Heart right ventricle (tissue), 16 donors: ENCODE measurements at regions of chr7 and their contacts with region 1.

Region 1: GRCh38 chr7:44200647-44201461 is at the start of gene YKT6:
- DNase-seq: peak; percentile 91 to 93
- ATAC-seq: peak; percentile 97 to 99 (median 98)
- H3K4me3 ChIP-seq: peak within 1 kb of the TSS; percentile 63 to 96 (median 84)
- H3K27ac ChIP-seq: peak within 1 kb of the TSS in 9 of 10 donors; percentile 46 to 91 (median 83)
- H3K4me1 ChIP-seq: peaks cover 4 to 31% (median 16%) of the 10 kb centered on the region in 9 donors
- H3K27me3 ChIP-seq: peaks cover 0 to 8% (median 0%) of the 10 kb centered on the region in 7 donors
- CTCF ChIP-seq: peak; percentile 32 to 70 (median 63)
- total RNA-seq, gene YKT6: 42.2 to 58.2 (median 47.7) TPM

Region 2: GRCh38 chr7:43791665-43792064 is 409.2 kb before region 1 on chr7:
- intact Hi-C with region 1: no loop called
- DNase-seq: no peak
- ATAC-seq: peak in 1 of 8 donors; percentile 25
- H3K4me3 ChIP-seq: no peak overlapping the region
- H3K27ac ChIP-seq: no peak overlapping the region
- H3K4me1 ChIP-seq: peaks cover 0 to 10% (median 0%) of the 10 kb centered on the region in 9 donors
- H3K27me3 ChIP-seq: no peaks in the 10 kb centered on the region
- CTCF ChIP-seq: no peak

Region 3: GRCh38 chr7:43942997-43943704 is 257.7 kb before region 1 on chr7:
- intact Hi-C with region 1: no loop called
- DNase-seq: no peak
- ATAC-seq: peak in 2 of 8 donors; percentile 9 to 10
- H3K4me3 ChIP-seq: no peak overlapping the region
- H3K27ac ChIP-seq: no peak overlapping the region
- H3K4me1 ChIP-seq: no peaks in the 10 kb centered on the region
- H3K27me3 ChIP-seq: no peaks in the 10 kb centered on the region
- CTCF ChIP-seq: no peak

Region 4: GRCh38 chr7:44072364-44073231 is 128.3 kb before region 1 on chr7:
- intact Hi-C with region 1: loop called in 7 of 10 experiments (anchors 2 to 10 kb)
- DNase-seq: peak; percentile 81 to 82
- ATAC-seq: peak; percentile 50 to 79 (median 68)
- H3K4me3 ChIP-seq: no peak overlapping the region
- H3K27ac ChIP-seq: peak overlapping the region in 9 of 10 donors; percentile 64 to 93 (median 74)
- H3K4me1 ChIP-seq: peaks cover 19 to 58% (median 43%) of the 10 kb centered on the region in 9 donors
- H3K27me3 ChIP-seq: no peaks in the 10 kb centered on the region
- CTCF ChIP-seq: peak; percentile 37 to 83 (median 73)

Region 5: GRCh38 chr7:44082541-44083207 is 118.2 kb before region 1 on chr7:
- intact Hi-C with region 1: loop called in 4 of 10 experiments (anchors 5 to 10 kb)
- DNase-seq: peak; percentile 98 to 99
- ATAC-seq: peak; percentile 94 to 98 (median 96)
- H3K4me3 ChIP-seq: peak overlapping the region; percentile 65 to 92 (median 84)
- H3K27ac ChIP-seq: peak overlapping the region; percentile 73 to 96 (median 93)
- H3K4me1 ChIP-seq: peaks cover 9 to 56% (median 28%) of the 10 kb centered on the region in 9 donors
- H3K27me3 ChIP-seq: no peaks in the 10 kb centered on the region
- CTCF ChIP-seq: no peak

Region 6: DNA sequence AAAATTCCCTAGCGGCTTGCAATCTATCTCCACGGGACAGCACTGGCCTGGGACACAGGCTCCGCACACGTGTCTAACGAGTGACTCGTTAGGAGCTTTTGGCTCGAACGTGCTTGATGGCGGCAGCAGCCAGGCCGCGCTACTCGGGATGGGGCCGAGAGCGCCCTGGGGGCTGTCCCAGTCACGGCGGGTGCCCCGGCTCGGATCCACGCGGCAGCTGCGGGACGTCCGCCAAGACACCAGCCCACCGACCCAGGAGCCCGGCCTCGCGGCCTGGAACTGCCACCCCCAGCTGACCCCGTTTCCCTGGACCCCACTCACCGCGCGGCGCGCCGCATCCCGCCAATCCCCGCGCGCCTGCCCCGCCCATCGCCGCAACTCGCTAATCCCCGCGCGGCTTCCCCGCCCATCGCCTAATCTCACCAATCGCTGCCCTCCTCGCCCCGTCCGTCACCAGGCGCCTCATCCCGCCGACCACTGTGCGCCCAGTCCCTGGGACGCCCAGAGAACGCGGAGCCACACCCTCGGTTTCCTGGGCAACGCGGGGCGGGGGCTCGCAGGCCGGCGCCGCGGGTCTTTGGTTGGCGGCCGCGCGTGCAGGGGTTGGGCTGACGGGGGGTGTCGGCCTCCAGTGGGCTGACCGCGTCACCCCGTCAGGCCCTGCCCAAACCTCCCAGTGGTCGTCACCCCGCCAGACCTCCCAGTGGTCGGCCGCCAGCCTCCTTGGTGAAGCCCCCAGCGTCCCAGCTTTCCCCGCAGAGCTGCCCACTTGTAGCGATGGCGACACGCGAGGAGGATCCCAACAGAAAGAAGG is 77.5 kb before region 1 on chr7 and contains the start of gene POLD2:
- intact Hi-C with region 1: loop called in 1 of 10 experiments (anchors 5 kb)
- DNase-seq: peak; percentile 99
- ATAC-seq: peak; percentile 98 to 99 (median 99)
- H3K4me3 ChIP-seq: peak within 1 kb of the TSS; percentile 33 to 90 (median 74)
- H3K27ac ChIP-seq: peak within 1 kb of the TSS; percentile 0 to 94 (median 88)
- H3K4me1 ChIP-seq: peaks cover 0 to 51% (median 18%) of the 10 kb centered on the region in 9 donors
- H3K27me3 ChIP-seq: no peaks in the 10 kb centered on the region
- CTCF ChIP-seq: peak in 1 of 9 donors; percentile 15
- total RNA-seq, gene POLD2: 64.4 to 92.0 (median 76.8) TPM

Region 7: GRCh38 chr7:44131173-44132029 is 69.5 kb before region 1 on chr7:
- intact Hi-C with region 1: loop called in 4 of 10 experiments (anchors 5 to 10 kb)
- DNase-seq: no peak
- ATAC-seq: peak; percentile 45 to 80 (median 62)
- H3K4me3 ChIP-seq: no peak overlapping the region
- H3K27ac ChIP-seq: peak overlapping the region in 9 of 10 donors; percentile 40 to 84 (median 72)
- H3K4me1 ChIP-seq: peaks cover 0 to 64% (median 16%) of the 10 kb centered on the region in 9 donors
- H3K27me3 ChIP-seq: no peaks in the 10 kb centered on the region
- CTCF ChIP-seq: peak in 7 of 9 donors; percentile 28 to 56 (median 41)

Region 8: DNA sequence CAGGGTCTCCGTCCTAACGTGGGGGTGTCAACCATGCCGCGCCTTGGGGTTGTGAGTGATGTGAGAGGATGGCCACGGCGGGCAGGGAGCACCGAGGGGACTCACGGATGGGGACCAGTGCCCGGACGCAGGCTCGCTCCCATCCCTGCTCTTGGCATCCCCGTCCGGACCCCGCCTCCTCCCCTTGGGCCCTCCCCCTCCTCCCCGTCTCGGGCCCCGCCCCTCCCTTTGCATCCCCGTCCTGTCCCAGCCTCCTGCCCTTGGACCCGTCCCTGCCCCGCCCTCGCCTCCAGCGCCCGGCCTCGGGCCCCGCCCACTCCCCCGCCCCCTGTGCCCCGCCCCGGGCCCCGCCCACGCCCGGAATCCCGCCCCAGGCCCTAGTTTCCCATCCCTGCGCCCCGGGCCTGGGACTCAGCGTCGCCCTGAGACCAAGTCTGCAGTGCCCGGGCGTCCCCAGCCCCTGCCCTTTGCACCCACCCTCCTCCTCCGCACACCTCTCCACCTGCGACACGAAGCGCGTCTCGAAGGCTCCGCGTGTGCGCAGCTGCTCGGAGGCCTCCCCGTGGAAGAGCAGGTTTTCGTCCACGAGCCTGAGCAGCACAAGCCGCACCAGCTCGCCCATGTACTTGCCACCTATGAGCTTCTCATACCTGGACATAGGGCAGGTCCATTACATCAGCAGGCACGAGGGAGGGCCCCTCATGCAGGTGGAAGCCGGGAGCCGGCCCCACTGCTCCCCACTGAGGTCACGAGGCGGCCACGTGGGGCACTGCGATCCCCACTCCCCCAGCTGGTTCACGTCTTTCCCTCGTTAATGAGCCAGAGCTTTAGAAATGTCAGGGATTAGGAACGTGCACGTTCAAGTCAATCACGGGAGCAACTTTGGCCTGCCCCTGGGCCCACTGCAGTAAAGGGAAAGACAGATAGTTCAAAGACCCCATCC is 54.6 kb before region 1 on chr7:
- intact Hi-C with region 1: loop called in 2 of 10 experiments (anchors 10 kb)
- DNase-seq: peak; percentile 79 to 86
- ATAC-seq: peak; percentile 83 to 93 (median 91)
- H3K4me3 ChIP-seq: peak overlapping the region; percentile 18 to 59 (median 54)
- H3K27ac ChIP-seq: no peak overlapping the region
- H3K4me1 ChIP-seq: peaks cover 0 to 21% (median 12%) of the 10 kb centered on the region in 9 donors
- H3K27me3 ChIP-seq: peaks cover 0 to 26% (median 9%) of the 10 kb centered on the region in 7 donors
- CTCF ChIP-seq: no peak

Region 9: DNA sequence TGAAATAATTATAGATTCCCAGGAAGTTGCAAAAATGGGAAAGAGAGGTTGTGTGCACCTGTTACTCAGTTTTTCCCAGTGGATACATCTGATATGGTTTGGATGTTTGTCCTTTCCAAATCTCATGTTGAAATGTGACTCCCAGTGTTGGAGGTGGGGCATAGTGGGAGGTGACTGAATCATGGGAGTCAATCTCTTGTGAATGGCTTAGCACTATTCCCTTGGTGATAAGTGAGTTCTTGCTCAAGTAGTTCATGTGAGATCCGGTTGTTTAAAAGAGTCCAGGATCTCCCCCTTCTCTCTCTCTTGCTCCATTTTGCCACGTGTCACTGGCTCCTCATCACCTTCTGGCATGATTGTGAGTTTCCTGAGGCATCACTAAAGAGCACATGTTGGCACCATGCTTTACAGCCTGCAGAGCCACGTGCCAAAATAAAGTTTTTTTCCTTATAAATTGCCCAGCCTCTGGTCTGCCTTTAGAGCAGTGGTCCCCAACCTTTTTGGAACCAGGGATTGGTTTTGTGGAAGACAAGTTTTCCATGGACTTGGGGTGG is 1106.0 kb after region 1 on chr7:
- intact Hi-C with region 1: no loop called
- DNase-seq: no peak
- ATAC-seq: peak in 1 of 8 donors; percentile 50
- H3K4me3 ChIP-seq: no peak overlapping the region
- H3K27ac ChIP-seq: no peak overlapping the region
- H3K4me1 ChIP-seq: no peaks in the 10 kb centered on the region
- H3K27me3 ChIP-seq: peaks cover 0 to 2% (median 0%) of the 10 kb centered on the region in 7 donors
- CTCF ChIP-seq: no peak